ENCODE measurements at regions of chr12 and their contacts with region 1.

Region 1: DNA sequence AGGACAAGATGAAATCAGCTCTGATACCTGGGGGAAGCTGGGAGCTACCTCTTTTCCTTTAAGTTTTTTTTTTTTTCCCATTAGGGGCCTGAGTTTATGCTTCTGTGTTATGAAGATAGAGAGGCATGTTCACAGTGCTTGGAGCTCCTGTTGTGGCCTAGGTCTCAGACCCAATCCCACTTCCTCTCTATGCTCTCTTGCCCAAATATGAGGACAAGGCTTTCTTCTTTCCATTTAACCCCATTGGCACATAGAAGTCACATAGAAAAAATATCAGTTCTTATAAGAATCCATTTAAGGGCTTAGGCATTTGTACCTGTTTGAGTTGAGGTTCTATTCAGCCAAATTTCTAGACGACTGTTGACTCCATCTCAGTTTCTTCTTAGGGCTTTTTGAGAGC is 12.6 kb downstream of the MRPS35 start:
- DNase-seq: no peak
- ATAC-seq: no peak
- H3K4me3 ChIP-seq: no peak overlapping the region
- H3K27ac ChIP-seq: no peak overlapping the region
- H3K4me1 ChIP-seq: no peaks in the 10 kb centered on the region
- H3K27me3 ChIP-seq: no peaks in the 10 kb centered on the region
- CTCF ChIP-seq: no peak
- POLR2A ChIP-seq: no peak
- RAD21 ChIP-seq: no peak

Region 2: GRCh38 chr12:27504507-27504906 is 218.7 kb before region 1 on chr12:
- CTCF ChIA-PET with region 1: no interaction called
- POLR2A ChIA-PET with region 1: no interaction called
- dilution Hi-C with region 1: no loop called
- in situ Hi-C with region 1: no loop called
- intact Hi-C with region 1: no loop called
- DNase-seq: peak; percentile 19
- ATAC-seq: no peak
- H3K4me3 ChIP-seq: no peak overlapping the region
- H3K27ac ChIP-seq: no peak overlapping the region
- H3K4me1 ChIP-seq: peaks cover 6% of the 10 kb centered on the region
- H3K27me3 ChIP-seq: no peaks in the 10 kb centered on the region
- CTCF ChIP-seq: no peak
- POLR2A ChIP-seq: no peak
- RAD21 ChIP-seq: no peak

Region 3: DNA sequence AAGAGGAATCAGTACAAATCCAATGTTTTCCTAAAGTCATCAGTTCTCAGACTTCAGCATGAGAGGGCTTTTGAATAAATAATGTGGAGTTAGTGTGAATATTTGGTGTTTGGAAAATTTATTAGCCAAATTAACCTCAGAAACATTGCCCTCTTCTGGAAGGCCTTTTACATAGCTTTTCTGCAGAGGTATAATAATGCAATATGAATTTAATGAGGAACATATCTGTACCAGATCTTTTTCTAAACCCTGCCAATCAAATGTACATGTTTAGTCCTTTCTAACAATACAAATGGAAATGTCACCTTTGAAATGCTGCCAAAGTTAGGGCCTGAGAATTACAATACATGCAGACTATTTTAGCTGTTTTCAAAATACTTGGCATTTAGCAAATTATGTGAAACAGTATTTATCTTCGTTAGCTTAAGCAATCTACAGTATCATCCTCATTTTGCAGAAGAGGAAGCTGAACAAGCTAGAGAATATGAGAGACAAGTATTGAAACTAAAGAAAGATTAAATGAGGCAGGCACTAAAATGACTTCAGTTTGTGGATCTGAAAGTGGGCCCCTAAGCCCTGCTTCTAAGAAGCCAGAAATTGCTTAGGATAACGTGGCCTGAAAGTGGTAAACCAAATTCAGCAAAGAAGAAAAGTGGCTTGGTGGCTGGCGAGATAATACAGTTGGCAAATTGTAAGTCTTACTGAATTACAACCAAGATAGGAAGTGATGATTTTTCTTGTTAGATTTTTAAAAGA is 117.2 kb after region 1 on chr12:
- CTCF ChIA-PET with region 1: no interaction called
- POLR2A ChIA-PET with region 1: interaction called, 17 read pairs
- dilution Hi-C with region 1: no loop called
- in situ Hi-C with region 1: no loop called
- intact Hi-C with region 1: no loop called
- DNase-seq: no peak
- ATAC-seq: 0 out of 2 replicates have a peak, but pooled peaks have one; percentile 30
- H3K4me3 ChIP-seq: no peak overlapping the region
- H3K27ac ChIP-seq: no peak overlapping the region
- H3K4me1 ChIP-seq: peaks cover 6% of the 10 kb centered on the region; the same call in 1 of the 2 replicates
- H3K27me3 ChIP-seq: no peaks in the 10 kb centered on the region
- CTCF ChIP-seq: peak; percentile 58
- POLR2A ChIP-seq: no peak
- RAD21 ChIP-seq: peak; percentile 33; the same call in 1 of the 2 replicates

Measured in IMR-90 (cell line).